ENCODE measurements at regions of chr17 and their contacts with region 1.

Region 1: DNA sequence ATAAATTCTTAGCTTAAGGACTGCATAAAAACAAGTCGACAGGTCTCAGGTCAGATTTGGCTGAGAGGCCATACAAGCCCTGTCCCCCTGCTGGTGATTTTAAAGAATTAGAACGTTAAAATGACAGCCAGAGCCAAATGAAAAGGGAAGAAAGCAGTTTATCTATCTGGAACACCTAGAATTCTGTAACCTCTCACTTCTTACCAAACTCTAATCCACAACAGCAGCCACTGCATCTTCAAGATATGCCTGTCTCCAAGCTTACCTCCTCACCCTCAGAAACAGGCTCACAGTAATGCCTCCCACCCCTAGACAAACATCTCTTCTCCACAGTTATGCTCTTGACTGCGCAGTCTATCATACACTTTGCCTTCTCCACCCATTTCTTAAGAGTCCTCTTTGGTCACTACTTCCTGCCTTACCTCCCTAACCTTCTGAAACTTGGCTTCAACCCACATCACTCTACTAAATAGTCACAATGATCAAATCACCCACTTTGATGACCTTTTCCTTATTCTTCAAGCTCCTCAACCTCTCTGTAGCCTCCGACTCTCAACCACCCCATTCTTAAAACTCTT is 14.2 kb downstream of the ANKFY1 start:
- DNase-seq: peak in 4 of 14 experiments; percentile 18 to 62 (median 42)
- ATAC-seq: no peak
- H3K4me3 ChIP-seq: no peak overlapping the region
- H3K4me3 Mint-ChIP-seq: no peak overlapping the region
- H3K27ac ChIP-seq: no peak overlapping the region
- H3K27ac Mint-ChIP-seq: peak overlapping the region; percentile 6
- H3K4me1 ChIP-seq: peaks cover 10% of the 10 kb centered on the region
- H3K4me1 Mint-ChIP-seq: peaks cover 62% of the 10 kb centered on the region
- H3K27me3 ChIP-seq: no peaks in the 10 kb centered on the region
- H3K27me3 Mint-ChIP-seq: no peaks in the 10 kb centered on the region
- CTCF ChIP-seq: peak; percentile 63

Region 2: GRCh38 chr17:4276511-4276910 is 27.0 kb after region 1 on chr17:
- CTCF ChIA-PET with region 1: interaction called, 3 read pairs
- POLR2A ChIA-PET with region 1: no interaction called
- intact Hi-C with region 1: loop called in 1 of 2 experiments (anchors 5 kb)
- DNase-seq: no peak
- ATAC-seq: no peak
- H3K4me3 ChIP-seq: no peak overlapping the region
- H3K4me3 Mint-ChIP-seq: no peak overlapping the region
- H3K27ac ChIP-seq: no peak overlapping the region
- H3K27ac Mint-ChIP-seq: peak overlapping the region; percentile 16
- H3K4me1 ChIP-seq: no peaks in the 10 kb centered on the region
- H3K4me1 Mint-ChIP-seq: no peaks in the 10 kb centered on the region
- H3K27me3 ChIP-seq: no peaks in the 10 kb centered on the region
- H3K27me3 Mint-ChIP-seq: no peaks in the 10 kb centered on the region
- CTCF ChIP-seq: no peak

Region 3: DNA sequence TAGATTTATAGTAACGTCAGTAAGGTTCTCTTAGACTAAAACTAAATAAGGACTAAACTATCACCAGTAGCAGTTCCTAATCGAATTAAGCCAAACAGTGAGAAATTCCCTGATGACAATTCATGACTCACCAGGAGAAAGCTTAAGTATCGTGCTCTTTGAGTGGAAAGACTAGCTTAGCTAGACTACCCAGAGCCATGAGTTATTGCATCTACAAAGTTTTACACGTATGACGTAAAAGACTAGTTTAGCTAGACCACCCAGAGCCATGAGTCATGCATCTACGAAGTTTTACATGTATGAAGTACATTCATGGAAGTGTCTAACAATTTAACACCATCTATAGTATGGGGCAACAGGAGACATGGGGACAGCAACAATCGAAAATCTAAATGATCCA is 80.3 kb after region 1 on chr17:
- CTCF ChIA-PET with region 1: no interaction called
- POLR2A ChIA-PET with region 1: no interaction called
- intact Hi-C with region 1: no loop called
- DNase-seq: no peak
- ATAC-seq: no peak
- H3K4me3 ChIP-seq: no peak overlapping the region
- H3K4me3 Mint-ChIP-seq: no peak overlapping the region
- H3K27ac ChIP-seq: no peak overlapping the region
- H3K27ac Mint-ChIP-seq: no peak overlapping the region
- H3K4me1 ChIP-seq: peaks cover 17% of the 10 kb centered on the region
- H3K4me1 Mint-ChIP-seq: peaks cover 67% of the 10 kb centered on the region
- H3K27me3 ChIP-seq: no peaks in the 10 kb centered on the region
- H3K27me3 Mint-ChIP-seq: no peaks in the 10 kb centered on the region
- CTCF ChIP-seq: no peak